ENCODE measurements at regions of chr19 and their contacts with region 1.

Region 1: GRCh38 chr19:43743022-43743421 is 11.7 kb downstream of the SMG9 start:
- DNase-seq: no peak
- ATAC-seq: no peak
- H3K4me3 ChIP-seq: no peak overlapping the region
- H3K4me3 Mint-ChIP-seq: peak overlapping the region in 1 of 10 donors; percentile 19
- H3K27ac ChIP-seq: no peak overlapping the region
- H3K27ac Mint-ChIP-seq: no peak overlapping the region
- H3K4me1 ChIP-seq: no peaks in the 10 kb centered on the region
- H3K4me1 Mint-ChIP-seq: peaks cover 6 to 32% (median 13%) of the 10 kb centered on the region in 7 donors
- H3K27me3 ChIP-seq: no peaks in the 10 kb centered on the region
- H3K27me3 Mint-ChIP-seq: no peaks in the 10 kb centered on the region

Region 2: GRCh38 chr19:43687660-43687997 is 55.4 kb before region 1 on chr19:
- CTCF ChIA-PET with region 1: no interaction called
- POLR2A ChIA-PET with region 1: no interaction called
- intact Hi-C with region 1: no loop called
- DNase-seq: no peak
- ATAC-seq: no peak
- H3K4me3 ChIP-seq: no peak overlapping the region
- H3K4me3 Mint-ChIP-seq: no peak overlapping the region
- H3K27ac ChIP-seq: no peak overlapping the region
- H3K27ac Mint-ChIP-seq: no peak overlapping the region
- H3K4me1 ChIP-seq: no peaks in the 10 kb centered on the region
- H3K4me1 Mint-ChIP-seq: no peaks in the 10 kb centered on the region
- H3K27me3 ChIP-seq: no peaks in the 10 kb centered on the region
- H3K27me3 Mint-ChIP-seq: peaks cover 0 to 4% (median 0%) of the 10 kb centered on the region in 5 donors

Region 3: GRCh38 chr19:43754503-43755255 is 11.7 kb after region 1 on chr19 and contains the start of gene SMG9:
- CTCF ChIA-PET with region 1: interaction called, 12 read pairs
- POLR2A ChIA-PET with region 1: interaction called, 10 read pairs
- intact Hi-C with region 1: loop called in 1 of 2 experiments (anchors 1 kb)
- DNase-seq: peak; percentile 98 to 100 (median 99)
- ATAC-seq: peak; percentile 92
- H3K4me3 ChIP-seq: peak within 1 kb of the TSS; percentile 95
- H3K4me3 Mint-ChIP-seq: peak within 1 kb of the TSS; percentile 94 to 99 (median 97)
- H3K27ac ChIP-seq: peak within 1 kb of the TSS; percentile 85
- H3K27ac Mint-ChIP-seq: peak within 1 kb of the TSS; percentile 96 to 100 (median 98)
- H3K4me1 ChIP-seq: peaks cover 20 to 27% of the 10 kb centered on the region in 2 donors
- H3K4me1 Mint-ChIP-seq: peaks cover 5 to 62% (median 45%) of the 10 kb centered on the region in 7 donors
- H3K27me3 ChIP-seq: no peaks in the 10 kb centered on the region
- H3K27me3 Mint-ChIP-seq: peaks cover 0 to 6% (median 0%) of the 10 kb centered on the region in 5 donors
- total RNA-seq, gene SMG9: 48.5 to 75.9 (median 53.9) TPM

Region 4: DNA sequence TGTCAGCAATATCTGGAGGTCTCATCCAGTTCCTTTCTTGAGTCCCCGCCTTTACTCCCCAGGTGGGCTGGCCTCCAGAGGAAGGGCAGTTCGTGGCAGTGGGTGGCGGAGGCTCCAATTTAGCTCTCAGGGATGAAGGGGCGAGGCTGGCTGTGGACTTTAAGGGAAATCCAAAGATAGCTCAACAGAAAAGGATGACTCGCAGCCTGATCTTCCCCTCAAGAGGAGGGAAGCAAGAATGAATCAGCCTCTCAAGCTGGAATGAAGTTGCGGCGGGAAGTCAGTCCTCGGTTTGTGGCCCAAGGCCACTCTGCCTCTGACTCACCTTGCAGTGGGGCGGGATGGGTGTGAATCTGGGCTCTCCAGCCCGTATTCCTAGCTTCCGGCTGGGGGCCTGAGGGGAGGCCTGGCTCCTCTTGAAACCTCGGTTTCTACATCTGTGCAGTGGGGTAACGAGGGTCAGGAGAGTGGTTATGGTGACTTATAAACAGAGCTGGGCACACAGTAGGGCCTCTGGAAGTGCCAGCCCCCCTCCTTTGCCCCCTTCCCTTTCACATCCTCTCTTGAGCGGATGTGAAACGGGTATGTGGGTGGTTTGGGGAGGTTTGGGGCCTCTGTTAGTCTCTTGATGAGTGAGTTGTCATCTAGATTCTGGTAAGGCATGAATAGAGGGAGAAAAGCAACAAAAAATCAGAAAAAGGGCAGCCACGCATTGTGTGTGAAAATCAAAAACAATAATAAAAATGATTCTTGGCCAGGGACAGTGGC is 22.3 kb after region 1 on chr19:
- CTCF ChIA-PET with region 1: interaction called, 10 read pairs
- POLR2A ChIA-PET with region 1: no interaction called
- intact Hi-C with region 1: no loop called
- DNase-seq: peak in 8 of 9 donors; percentile 20 to 86 (median 38)
- ATAC-seq: peak; percentile 81
- H3K4me3 ChIP-seq: no peak overlapping the region
- H3K4me3 Mint-ChIP-seq: peak overlapping the region; percentile 35 to 80 (median 67)
- H3K27ac ChIP-seq: peak overlapping the region; percentile 45
- H3K27ac Mint-ChIP-seq: peak overlapping the region; percentile 78 to 94 (median 88)
- H3K4me1 ChIP-seq: peaks cover 23 to 32% of the 10 kb centered on the region in 2 donors
- H3K4me1 Mint-ChIP-seq: peaks cover 32 to 73% (median 40%) of the 10 kb centered on the region in 7 donors
- H3K27me3 ChIP-seq: no peaks in the 10 kb centered on the region
- H3K27me3 Mint-ChIP-seq: no peaks in the 10 kb centered on the region

Region 5: DNA sequence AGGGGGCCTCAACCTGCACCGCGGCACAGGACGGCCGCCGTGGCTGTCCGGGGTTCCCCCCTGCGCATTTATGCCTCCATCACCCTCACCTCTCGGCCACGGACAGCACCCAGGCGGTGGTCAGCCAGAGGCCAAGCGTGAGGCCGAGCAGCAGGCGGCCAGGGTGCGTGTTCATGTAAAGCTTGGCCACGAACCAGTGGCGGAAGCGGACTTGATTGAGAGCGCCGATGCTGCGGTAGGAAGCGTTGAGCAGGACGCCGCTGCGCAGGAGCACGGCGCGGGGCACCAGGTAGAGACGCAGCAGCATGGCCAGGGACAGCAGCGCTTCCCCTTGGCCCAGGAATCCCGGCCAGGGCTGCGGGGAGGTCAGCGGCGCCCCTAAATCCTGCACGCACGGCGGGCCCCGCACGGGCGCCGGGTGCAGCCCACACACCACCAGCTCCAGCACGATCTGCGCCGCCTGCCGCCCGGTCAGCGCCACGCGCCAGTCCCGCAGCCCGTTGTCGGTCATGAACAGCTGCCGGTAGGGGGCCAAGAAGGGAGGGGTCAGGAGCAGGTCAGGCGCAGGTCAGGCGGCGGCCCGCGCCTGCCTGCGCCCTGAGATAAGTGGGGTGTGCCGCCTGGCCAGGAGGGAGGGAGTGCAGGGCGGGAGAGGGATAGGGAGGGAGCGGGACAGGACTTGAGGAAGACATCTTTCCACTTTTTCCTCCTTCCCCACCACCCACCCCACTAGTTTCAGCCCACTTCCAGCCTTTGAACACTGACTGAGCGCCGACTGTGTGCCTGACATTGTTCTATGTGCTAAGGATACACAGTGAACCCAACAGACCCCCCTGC is 31.3 kb after region 1 on chr19:
- CTCF ChIA-PET with region 1: interaction called, 11 read pairs
- POLR2A ChIA-PET with region 1: interaction called, 9 read pairs
- intact Hi-C with region 1: no loop called
- DNase-seq: no peak
- ATAC-seq: no peak
- H3K4me3 ChIP-seq: no peak overlapping the region
- H3K4me3 Mint-ChIP-seq: no peak overlapping the region
- H3K27ac ChIP-seq: no peak overlapping the region
- H3K27ac Mint-ChIP-seq: peak overlapping the region in 1 of 9 donors; percentile 22
- H3K4me1 ChIP-seq: peaks cover 17 to 32% of the 10 kb centered on the region in 2 donors
- H3K4me1 Mint-ChIP-seq: peaks cover 34 to 52% (median 42%) of the 10 kb centered on the region in 7 donors
- H3K27me3 ChIP-seq: no peaks in the 10 kb centered on the region
- H3K27me3 Mint-ChIP-seq: no peaks in the 10 kb centered on the region

Region 6: DNA sequence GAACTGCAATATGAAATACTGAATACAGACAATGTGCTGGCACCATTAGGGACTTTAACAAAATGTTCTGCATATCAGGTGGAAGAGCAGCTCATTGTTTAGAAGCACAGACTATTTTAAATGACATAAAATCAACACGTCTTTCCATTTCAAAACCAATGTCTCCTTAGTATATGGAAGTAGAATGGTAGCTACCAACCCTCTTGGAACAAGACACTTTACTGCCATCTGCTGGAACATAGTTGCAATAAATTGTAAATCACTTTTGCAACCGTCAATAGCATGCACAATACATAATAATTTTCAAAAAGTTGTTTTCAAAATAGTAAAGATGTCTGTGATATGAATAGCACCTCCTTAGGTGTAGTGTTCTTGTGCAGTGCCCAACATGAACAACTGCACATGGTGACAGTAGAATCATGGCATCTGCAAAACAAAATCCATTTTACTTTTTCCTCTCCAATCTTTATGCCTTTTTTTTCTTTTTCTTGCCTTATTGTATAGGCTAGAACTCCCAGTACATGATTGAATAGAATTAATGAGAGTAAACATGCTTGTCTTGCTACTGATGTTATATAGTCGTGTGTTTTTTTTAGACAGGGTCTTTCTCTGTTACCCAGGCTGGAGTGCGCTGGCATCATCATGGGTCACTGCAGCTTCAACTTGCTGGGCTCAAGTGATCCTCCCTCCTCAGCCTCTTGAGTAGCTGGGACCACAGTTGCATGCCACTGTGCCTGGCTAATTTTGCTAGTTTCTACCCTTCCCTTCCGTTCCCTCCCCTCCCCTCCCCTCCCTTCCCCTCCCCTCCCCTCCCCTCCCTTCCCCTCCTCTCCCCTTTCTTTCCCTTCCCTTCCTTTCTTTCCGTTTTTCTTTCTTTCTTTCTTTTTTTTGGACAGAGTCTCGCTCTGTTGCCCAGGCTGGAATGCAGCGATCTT is 67.0 kb after region 1 on chr19:
- CTCF ChIA-PET with region 1: interaction called, 17 read pairs
- POLR2A ChIA-PET with region 1: interaction called, 6 read pairs
- intact Hi-C with region 1: loop called (anchors 1 kb)
- DNase-seq: peak in 7 of 9 donors; percentile 14 to 59 (median 49)
- ATAC-seq: peak; percentile 75
- H3K4me3 ChIP-seq: no peak overlapping the region
- H3K4me3 Mint-ChIP-seq: no peak overlapping the region
- H3K27ac ChIP-seq: no peak overlapping the region
- H3K27ac Mint-ChIP-seq: no peak overlapping the region
- H3K4me1 ChIP-seq: no peaks in the 10 kb centered on the region
- H3K4me1 Mint-ChIP-seq: peaks cover 0 to 3% (median 0%) of the 10 kb centered on the region in 7 donors
- H3K27me3 ChIP-seq: no peaks in the 10 kb centered on the region
- H3K27me3 Mint-ChIP-seq: peaks cover 12 to 27% (median 17%) of the 10 kb centered on the region in 5 donors

Measured in naive thymus-derived CD4-positive, alpha-beta T cell (primary cell).